ENCODE measurements at regions of chr9 and their contacts with region 1.

Region 1: DNA sequence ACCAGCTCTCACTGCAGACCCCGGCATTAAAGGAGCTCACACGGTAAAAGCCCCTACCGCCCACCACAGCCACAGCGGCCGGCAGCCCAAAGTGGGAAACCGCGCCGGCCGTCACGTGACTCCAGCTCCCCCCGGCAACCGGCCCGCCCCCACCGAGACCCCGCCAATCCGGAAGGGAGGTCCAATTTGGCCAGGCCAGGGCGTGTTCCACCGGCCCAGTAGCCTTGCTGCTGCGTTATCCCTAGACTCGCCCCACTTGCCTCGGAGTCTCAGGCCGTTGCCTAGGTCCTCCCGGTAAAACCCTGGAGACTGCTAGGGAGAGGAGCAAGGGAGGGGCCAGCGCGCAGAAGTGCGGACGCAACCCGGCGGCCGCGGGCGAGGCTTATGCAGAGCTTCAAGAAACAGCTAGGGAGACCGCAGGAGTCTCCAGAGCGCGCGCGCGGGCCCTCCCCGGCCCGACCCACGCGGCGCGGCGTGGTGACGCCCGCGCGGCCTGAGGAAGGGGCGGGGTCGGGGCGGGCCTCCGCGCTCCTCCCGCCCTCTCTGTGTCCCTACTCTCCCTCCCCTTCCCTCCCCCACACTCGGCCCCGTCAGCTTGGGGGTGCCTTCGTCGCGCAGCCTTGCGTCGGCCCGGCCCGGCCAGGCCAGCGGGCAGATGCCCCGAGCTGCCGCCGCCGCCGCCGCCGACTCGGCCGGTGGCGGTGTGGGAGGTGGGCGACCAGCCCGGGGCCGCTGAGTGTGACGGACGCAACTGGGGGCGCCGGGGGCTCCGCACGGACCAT is at the start of gene RIC1:
- DNase-seq: peak; percentile 83
- ATAC-seq: peak; percentile 89
- H3K4me3 ChIP-seq: peak within 1 kb of the TSS; percentile 72 to 93
- H3K27ac ChIP-seq: peak within 1 kb of the TSS; percentile 92
- H3K4me1 ChIP-seq: peaks cover 37 to 50% of the 10 kb centered on the region in 2 experiments
- H3K27me3 ChIP-seq: no peaks in the 10 kb centered on the region
- CTCF ChIP-seq: no peak
- POLR2A ChIP-seq: peak; percentile 96
- RAD21 ChIP-seq: no peak
- total RNA-seq, gene RIC1: 25.5 TPM

Region 2: DNA sequence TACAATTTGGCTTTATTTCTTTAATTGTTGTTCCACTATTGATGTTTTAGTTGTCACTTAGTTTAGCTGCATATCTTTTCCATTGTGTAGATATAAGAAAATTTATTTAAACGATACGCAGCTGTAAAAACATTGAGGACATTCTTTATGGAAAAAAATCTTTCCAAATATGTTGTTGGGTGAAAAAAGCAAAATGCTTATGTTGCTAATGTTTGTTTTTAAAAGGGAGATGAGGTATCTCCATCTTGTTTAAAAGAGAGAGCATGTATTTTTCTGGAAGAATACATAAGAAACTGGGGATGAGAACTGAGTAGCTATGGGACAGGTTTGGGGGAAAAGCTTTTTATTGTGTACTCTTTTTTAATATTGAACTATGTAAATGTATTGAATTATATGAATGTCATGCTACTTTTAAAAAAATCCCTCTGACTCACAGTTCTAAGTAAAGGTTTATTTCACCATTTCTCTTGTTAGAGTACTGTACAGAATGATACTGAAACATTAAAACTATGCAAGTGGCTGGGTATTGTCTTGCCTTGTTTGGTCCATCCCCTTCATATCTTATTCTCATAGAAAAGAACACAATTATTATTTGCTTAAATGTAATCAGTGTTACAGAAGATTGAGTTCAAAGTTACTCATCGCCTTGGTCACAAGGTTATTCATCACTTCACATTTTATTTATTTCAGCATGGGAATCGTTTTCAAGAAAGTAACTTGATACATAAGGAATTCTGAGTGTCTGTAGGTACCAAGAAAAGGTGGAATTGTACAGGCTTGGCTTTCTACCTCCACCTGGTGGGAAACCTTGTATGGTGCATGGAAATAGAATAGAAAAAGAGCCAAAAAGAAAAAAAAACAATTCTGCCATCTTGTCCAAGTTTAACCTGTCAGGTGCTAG is 86.0 kb after region 1 on chr9:
- CTCF ChIA-PET with region 1: interaction called, 3 read pairs
- POLR2A ChIA-PET with region 1: no interaction called
- RAD21 ChIA-PET with region 1: no interaction called
- intact Hi-C with region 1: loop called (anchors 2 kb)
- DNase-seq: peak; percentile 27
- ATAC-seq: peak; percentile 72
- H3K4me3 ChIP-seq: no peak overlapping the region
- H3K27ac ChIP-seq: no peak overlapping the region
- H3K4me1 ChIP-seq: no peaks in the 10 kb centered on the region
- H3K27me3 ChIP-seq: no peaks in the 10 kb centered on the region
- CTCF ChIP-seq: peak; percentile 48 to 67 (median 64); a peak in 5 of 6 replicates
- POLR2A ChIP-seq: no peak
- RAD21 ChIP-seq: peak; percentile 73

Region 3: GRCh38 chr9:6605202-6605601 is 976.5 kb after region 1 on chr9:
- CTCF ChIA-PET with region 1: no interaction called
- POLR2A ChIA-PET with region 1: no interaction called
- RAD21 ChIA-PET with region 1: no interaction called
- intact Hi-C with region 1: no loop called
- DNase-seq: no peak
- ATAC-seq: no peak
- H3K4me3 ChIP-seq: no peak overlapping the region
- H3K27ac ChIP-seq: no peak overlapping the region
- H3K4me1 ChIP-seq: no peaks in the 10 kb centered on the region
- H3K27me3 ChIP-seq: no peaks in the 10 kb centered on the region
- CTCF ChIP-seq: no peak
- POLR2A ChIP-seq: no peak
- RAD21 ChIP-seq: no peak

Measured in HCT116 (cell line).